ENCODE measurements at regions of chr1 and their contacts with region 1.

Region 1: GRCh38 chr1:27332536-27333281 is 9.1 kb upstream of the SYTL1 start:
- DNase-seq: peak; percentile 69
- H3K4me3 Mint-ChIP-seq: no peak overlapping the region
- H3K27ac Mint-ChIP-seq: no peak overlapping the region
- H3K4me1 Mint-ChIP-seq: peaks cover 24% of the 10 kb centered on the region
- H3K27me3 Mint-ChIP-seq: no peaks in the 10 kb centered on the region

Region 2: GRCh38 chr1:27314169-27314568 is 18.5 kb before region 1 on chr1:
- CTCF ChIA-PET with region 1: interaction called, 13 read pairs
- POLR2A ChIA-PET with region 1: interaction called, 3 read pairs
- intact Hi-C with region 1: no loop called
- DNase-seq: no peak
- H3K4me3 Mint-ChIP-seq: no peak overlapping the region
- H3K27ac Mint-ChIP-seq: no peak overlapping the region
- H3K4me1 Mint-ChIP-seq: no peaks in the 10 kb centered on the region
- H3K27me3 Mint-ChIP-seq: no peaks in the 10 kb centered on the region

Region 3: DNA sequence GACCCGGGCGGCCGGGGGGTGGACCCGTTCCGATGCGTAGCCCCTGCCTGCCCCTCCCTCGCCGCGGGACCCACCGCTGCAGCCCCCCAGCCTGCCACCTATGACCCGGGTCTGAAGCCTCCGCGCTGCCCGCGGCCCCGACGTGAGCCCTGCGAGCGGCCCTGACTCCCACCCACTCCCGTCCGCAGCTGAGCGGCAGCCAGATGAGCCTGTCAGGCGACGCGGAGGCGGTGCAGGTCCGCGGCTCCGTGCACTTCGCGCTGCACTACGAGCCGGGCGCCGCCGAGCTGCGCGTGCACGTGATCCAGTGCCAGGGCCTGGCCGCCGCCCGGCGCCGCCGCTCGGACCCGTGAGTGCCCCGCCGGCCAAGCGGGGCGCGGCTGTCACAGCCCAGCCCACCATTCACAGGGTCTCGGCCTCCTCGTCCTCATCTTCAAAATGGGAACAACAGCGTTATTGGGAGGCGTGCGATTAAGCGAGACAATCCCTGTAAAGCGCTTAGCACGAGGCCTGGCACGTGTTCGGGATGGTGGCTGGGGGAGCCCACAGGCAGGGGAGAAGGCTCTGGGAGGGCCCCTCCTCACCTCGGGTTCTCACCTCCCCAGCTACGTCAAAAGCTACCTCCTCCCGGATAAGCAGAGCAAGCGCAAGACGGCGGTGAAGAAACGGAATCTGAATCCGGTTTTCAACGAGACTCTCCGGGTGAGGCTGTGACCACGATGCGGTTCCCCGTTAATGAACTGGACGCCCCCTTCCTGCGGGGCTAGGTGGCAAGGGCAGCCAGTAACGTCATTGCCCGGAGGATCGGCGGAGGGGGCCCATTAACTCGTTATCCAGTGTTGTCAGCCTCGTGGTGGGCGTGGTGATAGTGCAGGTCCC is 17.3 kb after region 1 on chr1:
- CTCF ChIA-PET with region 1: interaction called, 80 read pairs
- POLR2A ChIA-PET with region 1: no interaction called
- intact Hi-C with region 1: no loop called
- DNase-seq: peak; percentile 24
- H3K4me3 Mint-ChIP-seq: no peak overlapping the region
- H3K27ac Mint-ChIP-seq: no peak overlapping the region
- H3K4me1 Mint-ChIP-seq: peaks cover 13% of the 10 kb centered on the region
- H3K27me3 Mint-ChIP-seq: no peaks in the 10 kb centered on the region

Region 4: GRCh38 chr1:27365372-27366112 is 32.8 kb after region 1 on chr1:
- CTCF ChIA-PET with region 1: interaction called, 17 read pairs
- POLR2A ChIA-PET with region 1: no interaction called
- intact Hi-C with region 1: no loop called
- DNase-seq: peak; percentile 92
- H3K4me3 Mint-ChIP-seq: peak overlapping the region; percentile 85
- H3K27ac Mint-ChIP-seq: peak overlapping the region; percentile 66
- H3K4me1 Mint-ChIP-seq: peaks cover 18% of the 10 kb centered on the region
- H3K27me3 Mint-ChIP-seq: no peaks in the 10 kb centered on the region

Region 5: GRCh38 chr1:27392096-27392777 is 59.5 kb after region 1 on chr1 and contains the start of gene GPR3:
- CTCF ChIA-PET with region 1: interaction called, 52 read pairs
- POLR2A ChIA-PET with region 1: no interaction called
- intact Hi-C with region 1: loop called (anchors 2 kb)
- DNase-seq: peak; percentile 96
- H3K4me3 Mint-ChIP-seq: peak within 1 kb of the TSS; percentile 78
- H3K27ac Mint-ChIP-seq: peak within 1 kb of the TSS; percentile 63
- H3K4me1 Mint-ChIP-seq: peaks cover 13% of the 10 kb centered on the region
- H3K27me3 Mint-ChIP-seq: no peaks in the 10 kb centered on the region
- total RNA-seq, gene GPR3: 1.3 to 1.5 TPM

Region 6: DNA sequence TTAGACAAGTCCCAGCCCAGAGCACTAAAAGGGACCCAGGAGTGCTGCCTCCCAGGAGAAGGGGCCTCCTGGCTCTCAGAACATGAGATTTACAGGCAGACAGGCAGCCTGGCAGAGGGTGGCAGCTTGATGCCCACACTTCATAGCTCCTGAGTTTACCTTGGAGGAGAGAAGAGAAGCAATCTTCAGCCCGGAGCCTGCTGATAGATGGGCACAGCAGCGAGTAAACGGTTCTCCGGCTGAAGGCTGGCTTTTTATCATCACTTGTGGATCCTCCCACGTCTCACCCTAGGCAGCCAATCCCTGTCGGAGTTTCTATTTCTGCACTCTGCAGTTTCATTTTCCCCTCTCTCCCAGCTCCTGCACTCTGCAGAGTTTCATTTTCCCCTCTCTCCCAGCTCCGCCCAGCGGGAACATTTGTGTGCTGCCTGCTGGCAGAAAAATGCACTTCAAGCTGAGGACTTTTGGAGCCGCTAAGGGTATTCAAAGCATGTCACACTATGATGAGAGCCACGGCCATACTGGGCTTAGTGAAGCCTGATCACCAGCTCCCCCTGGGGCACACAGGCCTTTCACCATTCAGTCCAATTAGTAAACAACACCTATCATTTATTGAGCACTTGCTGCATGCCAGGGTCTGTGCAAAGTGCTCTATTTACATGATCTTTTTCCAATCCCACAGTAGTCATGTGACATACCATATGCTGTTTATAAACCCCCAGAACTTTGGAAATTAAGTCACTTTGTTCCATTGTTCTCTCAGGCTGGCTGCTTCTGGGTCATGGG is 339.4 kb after region 1 on chr1 and contains the start of gene IFI6:
- CTCF ChIA-PET with region 1: no interaction called
- POLR2A ChIA-PET with region 1: no interaction called
- intact Hi-C with region 1: no loop called
- DNase-seq: peak; percentile 89
- H3K4me3 Mint-ChIP-seq: peak within 1 kb of the TSS; percentile 91
- H3K27ac Mint-ChIP-seq: peak within 1 kb of the TSS; percentile 84
- H3K4me1 Mint-ChIP-seq: peaks cover 29% of the 10 kb centered on the region
- H3K27me3 Mint-ChIP-seq: no peaks in the 10 kb centered on the region
- total RNA-seq, gene IFI6: 76.4 TPM

Measured in activated CD4-positive, alpha-beta memory T cell treated with anti-CD3 and anti-CD28 coated beads for 36 hours (primary cell).